Right ventricle myocardium inferior (tissue), 1 donor: ENCODE measurements at regions of chr1 and their contacts with region 1.

Region 1: DNA sequence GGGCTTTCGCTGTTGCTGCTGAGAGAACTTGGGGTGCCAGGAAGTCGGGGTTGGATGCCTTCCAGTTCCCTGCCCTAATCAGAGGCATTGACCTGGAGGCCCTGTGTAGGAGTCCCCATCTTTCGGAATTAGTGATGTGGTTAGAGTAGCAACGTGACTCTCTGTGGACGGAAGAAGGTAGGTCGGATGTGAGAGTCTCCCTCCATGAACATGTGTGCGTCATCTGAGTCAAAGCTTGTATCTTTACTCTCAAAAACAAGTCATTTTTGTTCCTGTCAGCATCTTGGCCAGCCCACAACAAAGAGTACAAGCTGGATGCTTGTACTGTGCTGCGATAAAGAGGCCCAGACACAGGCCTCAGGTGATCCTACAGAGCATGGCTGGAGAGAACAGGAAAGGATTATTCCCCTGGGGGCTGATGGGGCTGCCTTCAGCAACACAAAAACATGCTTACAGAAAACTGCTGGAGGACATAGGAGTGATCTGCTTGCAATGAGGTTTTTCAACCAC is 31.0 kb upstream of the IL10 start:
- DNase-seq: no peak
- ATAC-seq: no peak

Region 2: GRCh38 chr1:206445116-206445515 is 358.2 kb before region 1 on chr1:
- intact Hi-C with region 1: no loop called
- DNase-seq: peak; percentile 75
- ATAC-seq: peak; percentile 81

Region 3: DNA sequence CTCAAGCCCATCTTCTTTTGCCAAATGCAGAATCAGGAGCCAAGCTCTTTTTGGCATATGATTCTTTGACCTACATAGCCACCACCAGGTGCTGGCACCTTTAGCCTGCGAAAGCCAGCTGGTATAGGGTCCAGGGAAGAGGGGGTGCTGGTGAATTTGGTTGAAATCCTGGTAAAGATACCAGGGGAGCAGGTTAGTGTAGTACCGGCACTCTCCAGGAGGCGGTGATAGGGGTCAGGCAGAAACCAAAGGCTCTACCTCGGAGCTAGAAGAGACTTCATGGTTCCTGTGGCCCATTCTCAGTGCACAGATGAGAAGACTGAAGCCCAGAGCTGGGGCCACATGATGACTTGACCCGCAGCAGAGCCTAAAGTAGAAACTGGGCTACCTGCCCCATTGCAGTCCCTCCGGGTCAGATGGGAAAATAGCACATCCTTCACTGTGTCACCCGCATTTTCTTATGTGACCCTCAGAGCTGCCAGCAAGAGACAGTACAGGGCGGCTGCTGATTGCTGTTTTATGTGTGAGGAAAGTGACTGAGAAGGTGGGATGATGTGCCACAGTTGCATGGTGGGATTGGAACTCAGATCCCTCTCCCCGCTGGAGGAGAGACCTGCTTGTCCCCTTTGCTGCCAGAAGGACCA is 68.7 kb before region 1 on chr1:
- intact Hi-C with region 1: loop called (anchors 5 kb)
- DNase-seq: no peak
- ATAC-seq: no peak